Dendritic cell treated with granulocyte-macrophage colony-stimulating factor and Interleukin-4, amounts not matched to agents 40 ng/mL and 50 ng/mL, for 4 days (primary cell): ENCODE measurements at regions of chr20 and their contacts with region 1.

Region 1: GRCh38 chr20:36155991-36156390 is 1.5 kb downstream of the EPB41L1 start:
- H3K4me3 Mint-ChIP-seq: no peak overlapping the region
- H3K27ac Mint-ChIP-seq: no peak overlapping the region
- H3K4me1 Mint-ChIP-seq: peaks cover 10% of the 10 kb centered on the region
- H3K27me3 Mint-ChIP-seq: peaks cover 57% of the 10 kb centered on the region

Region 2: GRCh38 chr20:35699127-35699975 is 456.6 kb before region 1 on chr20 and contains the starts of genes NFS1 and ROMO1:
- intact Hi-C with region 1: no loop called
- H3K4me3 Mint-ChIP-seq: peak within 1 kb of the TSS; percentile 99
- H3K27ac Mint-ChIP-seq: peak within 1 kb of the TSS; percentile 99
- H3K4me1 Mint-ChIP-seq: peaks cover 37% of the 10 kb centered on the region
- H3K27me3 Mint-ChIP-seq: no peaks in the 10 kb centered on the region

Region 3: DNA sequence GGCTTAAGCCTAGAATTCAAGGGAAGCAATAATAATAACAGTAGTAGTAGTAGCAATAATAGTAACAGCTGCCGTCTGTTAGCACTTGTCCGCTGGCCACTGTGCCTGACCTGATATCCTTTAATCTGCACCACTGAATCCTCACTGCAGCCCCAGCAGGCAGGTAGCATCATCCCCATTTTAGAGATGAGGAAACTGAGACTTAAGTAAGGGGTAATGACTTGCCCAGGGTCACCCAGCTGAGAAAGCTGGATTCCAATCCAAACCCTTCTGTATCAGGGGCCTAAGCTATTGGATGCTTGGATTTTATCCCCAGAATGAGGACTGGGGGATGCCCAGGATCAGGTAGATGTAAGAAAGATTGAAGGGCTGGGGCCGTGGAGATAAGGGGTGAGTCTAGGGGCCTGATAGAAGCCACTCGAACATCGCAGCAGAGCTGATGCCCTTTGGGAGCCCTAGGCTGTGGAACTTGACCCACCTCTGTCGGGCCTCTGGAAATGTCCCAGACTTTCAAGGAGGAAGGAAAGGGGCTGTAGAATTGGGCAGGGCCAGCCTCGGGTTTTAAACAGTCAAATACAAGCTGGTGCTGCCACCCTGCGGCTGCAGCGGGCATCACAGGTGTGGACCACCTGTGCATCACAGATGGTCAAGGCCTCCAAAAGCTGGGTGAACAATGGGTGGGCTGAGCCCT is 283.2 kb after region 1 on chr20:
- intact Hi-C with region 1: loop called (anchors 2 kb)
- H3K4me3 Mint-ChIP-seq: no peak overlapping the region
- H3K27ac Mint-ChIP-seq: no peak overlapping the region
- H3K4me1 Mint-ChIP-seq: peaks cover 11% of the 10 kb centered on the region
- H3K27me3 Mint-ChIP-seq: peaks cover 22% of the 10 kb centered on the region